ENCODE measurements at regions of chr7 and their contacts with region 1.

Region 1: DNA sequence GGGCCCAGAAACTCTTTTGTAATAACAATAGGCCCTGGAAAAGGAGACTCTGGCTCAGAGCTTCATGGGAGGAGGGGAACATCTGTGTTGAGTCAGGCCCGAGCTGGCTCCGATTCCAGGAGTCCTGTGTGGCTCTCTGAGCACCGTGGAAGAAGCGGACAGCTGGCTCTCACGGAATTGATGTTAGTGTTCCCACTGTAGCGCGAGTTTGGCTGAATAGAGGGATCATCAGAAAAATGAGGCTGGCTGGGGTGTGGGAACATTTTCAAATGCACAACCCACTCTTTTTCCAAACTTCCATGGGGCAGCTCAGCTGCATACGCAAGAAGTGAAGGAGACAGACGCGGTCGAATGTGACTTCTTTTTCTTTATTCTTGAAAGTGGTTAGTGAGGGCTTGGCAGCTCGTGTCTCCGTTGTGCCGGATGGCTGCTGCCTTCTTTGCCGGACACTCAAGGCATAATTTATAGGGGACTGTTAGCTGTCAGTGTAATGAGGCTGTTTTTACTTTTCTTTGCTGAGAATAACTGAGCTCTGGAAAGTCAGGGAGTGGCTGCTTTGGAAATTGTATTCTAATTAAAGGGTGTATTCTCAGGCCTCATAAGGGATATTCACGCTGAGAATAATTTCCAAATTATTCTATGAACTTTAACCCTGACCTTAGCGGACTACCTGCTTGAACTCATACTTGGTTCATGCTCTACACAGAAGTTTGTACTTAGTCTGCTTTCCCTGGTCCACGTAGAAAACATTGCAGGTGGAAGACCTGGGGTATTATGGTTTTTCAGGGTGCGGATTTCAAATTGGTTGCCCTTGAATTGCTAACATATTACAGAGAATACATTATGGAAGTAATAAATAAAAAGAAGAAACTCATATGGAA is 23.1 kb downstream of the MDFIC start:
- DNase-seq: no peak
- ATAC-seq: no peak
- H3K4me3 ChIP-seq: no peak overlapping the region
- H3K4me3 Mint-ChIP-seq: no peak overlapping the region
- H3K27ac ChIP-seq: no peak overlapping the region
- H3K27ac Mint-ChIP-seq: peak overlapping the region; percentile 15
- H3K4me1 ChIP-seq: peaks cover 20% of the 10 kb centered on the region
- H3K4me1 Mint-ChIP-seq: peaks cover 68% of the 10 kb centered on the region
- H3K27me3 ChIP-seq: no peaks in the 10 kb centered on the region
- H3K27me3 Mint-ChIP-seq: no peaks in the 10 kb centered on the region
- CTCF ChIP-seq: no peak

Region 2: DNA sequence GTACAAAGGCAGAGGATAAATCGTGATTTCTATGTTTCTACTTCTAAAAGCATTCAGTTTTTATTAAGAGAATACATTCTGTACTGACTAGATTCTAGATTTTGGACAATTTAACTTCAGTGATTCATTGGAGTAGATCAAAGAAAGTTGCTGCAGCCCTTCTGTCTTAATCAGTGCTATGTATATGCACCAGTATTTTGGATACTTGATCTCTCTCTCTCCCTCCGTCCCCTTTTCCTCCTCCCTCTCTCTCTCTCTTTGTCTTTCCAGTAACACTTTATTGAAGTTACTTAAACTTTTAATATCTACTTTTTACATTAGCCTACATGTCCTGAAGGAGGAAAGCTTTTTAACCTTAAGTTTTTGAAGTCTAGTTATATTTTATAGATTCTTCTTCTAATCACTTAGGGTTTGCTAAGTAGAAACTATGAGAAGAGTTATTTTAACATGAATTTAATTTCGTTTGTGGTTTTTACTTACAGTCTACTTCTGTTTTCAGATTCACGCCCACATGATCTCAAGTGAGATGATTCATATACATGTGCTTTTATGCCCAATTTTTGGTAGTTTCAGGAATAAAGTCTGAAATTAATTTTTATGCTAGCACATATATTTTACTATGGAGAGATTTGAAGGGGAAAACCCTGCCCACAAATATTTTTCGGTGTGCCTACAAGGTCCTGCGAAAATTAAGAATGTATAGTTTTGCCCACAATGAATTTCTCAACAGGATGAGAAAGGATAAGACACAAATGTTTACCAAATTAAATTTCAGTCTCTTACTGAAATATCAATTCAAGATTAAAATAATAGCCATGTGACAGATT is 13.9 kb before region 1 on chr7:
- CTCF ChIA-PET with region 1: interaction called, 4 read pairs
- POLR2A ChIA-PET with region 1: interaction called, 3 read pairs
- intact Hi-C with region 1: loop called in 1 of 2 experiments (anchors 2 kb)
- DNase-seq: peak in 2 of 9 experiments; percentile 31 to 54
- ATAC-seq: peak; percentile 54
- H3K4me3 ChIP-seq: peak overlapping the region; percentile 30 to 36
- H3K4me3 Mint-ChIP-seq: peak overlapping the region; percentile 78
- H3K27ac ChIP-seq: peak overlapping the region; percentile 43 to 65
- H3K27ac Mint-ChIP-seq: peak overlapping the region; percentile 89
- H3K4me1 ChIP-seq: peaks cover 78% of the 10 kb centered on the region
- H3K4me1 Mint-ChIP-seq: peaks cover 35% of the 10 kb centered on the region
- H3K27me3 ChIP-seq: no peaks in the 10 kb centered on the region
- H3K27me3 Mint-ChIP-seq: no peaks in the 10 kb centered on the region
- CTCF ChIP-seq: no peak

Region 3: DNA sequence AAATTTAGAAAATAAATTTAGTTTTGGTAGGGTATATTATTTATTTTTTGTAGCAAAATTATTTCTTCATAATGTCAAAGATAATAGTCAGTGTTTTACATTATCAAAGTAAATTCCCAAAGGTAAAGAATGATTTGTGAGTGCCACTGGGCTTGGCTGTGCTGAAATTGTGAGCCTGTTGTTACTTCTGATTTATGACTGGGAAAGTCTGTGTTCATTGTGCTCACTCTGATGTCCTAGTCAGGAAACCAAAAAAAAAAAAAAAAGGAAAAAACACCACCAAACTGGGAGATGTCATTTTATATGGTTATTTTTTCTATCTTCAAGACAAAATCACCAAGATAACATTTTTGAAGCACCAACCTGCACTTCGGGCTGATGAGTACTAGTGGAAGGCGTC is 21.2 kb after region 1 on chr7:
- CTCF ChIA-PET with region 1: no interaction called
- POLR2A ChIA-PET with region 1: no interaction called
- intact Hi-C with region 1: loop called in 1 of 2 experiments (anchors 2 kb)
- DNase-seq: no peak
- ATAC-seq: no peak
- H3K4me3 ChIP-seq: no peak overlapping the region
- H3K4me3 Mint-ChIP-seq: no peak overlapping the region
- H3K27ac ChIP-seq: no peak overlapping the region
- H3K27ac Mint-ChIP-seq: peak overlapping the region; percentile 45
- H3K4me1 ChIP-seq: no peaks in the 10 kb centered on the region
- H3K4me1 Mint-ChIP-seq: peaks cover 69% of the 10 kb centered on the region
- H3K27me3 ChIP-seq: no peaks in the 10 kb centered on the region
- H3K27me3 Mint-ChIP-seq: no peaks in the 10 kb centered on the region
- CTCF ChIP-seq: no peak

Region 4: GRCh38 chr7:115008465-115009114 is 63.6 kb after region 1 on chr7:
- CTCF ChIA-PET with region 1: no interaction called
- POLR2A ChIA-PET with region 1: no interaction called
- intact Hi-C with region 1: loop called (anchors 1 to 5 kb)
- DNase-seq: peak in 2 of 9 experiments; percentile 15 to 28
- ATAC-seq: peak; percentile 48
- H3K4me3 ChIP-seq: peak overlapping the region in 1 of 2 experiments; percentile 6
- H3K4me3 Mint-ChIP-seq: peak overlapping the region; percentile 73
- H3K27ac ChIP-seq: peak overlapping the region in 1 of 2 experiments; percentile 71
- H3K27ac Mint-ChIP-seq: peak overlapping the region; percentile 90
- H3K4me1 ChIP-seq: peaks cover 55% of the 10 kb centered on the region
- H3K4me1 Mint-ChIP-seq: peaks cover 71% of the 10 kb centered on the region
- H3K27me3 ChIP-seq: no peaks in the 10 kb centered on the region
- H3K27me3 Mint-ChIP-seq: no peaks in the 10 kb centered on the region
- CTCF ChIP-seq: no peak